HepG2 (cell line): ENCODE measurements at regions of chr13 and their contacts with region 1.

Region 1: GRCh38 chr13:24160454-24161009 is at the start of gene SPATA13:
- DNase-seq: peak; percentile 75
- ATAC-seq: peak; percentile 90
- H3K4me3 ChIP-seq: peak within 1 kb of the TSS; percentile 72 to 93 (median 87)
- H3K27ac ChIP-seq: peak within 1 kb of the TSS; percentile 62
- H3K4me1 ChIP-seq: peaks cover 33% of the 10 kb centered on the region
- H3K27me3 ChIP-seq: no peaks in the 10 kb centered on the region; a peak in 1 of 5 replicates
- CTCF ChIP-seq: no peak
- EP300 ChIP-seq: no peak
- POLR2A ChIP-seq: peak; percentile 78 to 89; a peak in 3 of 4 replicates
- RAD21 ChIP-seq: no peak; the same call in 1 of the 2 replicates
- total RNA-seq, gene SPATA13: 11.3 and 13.7 TPM in 2 replicates

Region 2: DNA sequence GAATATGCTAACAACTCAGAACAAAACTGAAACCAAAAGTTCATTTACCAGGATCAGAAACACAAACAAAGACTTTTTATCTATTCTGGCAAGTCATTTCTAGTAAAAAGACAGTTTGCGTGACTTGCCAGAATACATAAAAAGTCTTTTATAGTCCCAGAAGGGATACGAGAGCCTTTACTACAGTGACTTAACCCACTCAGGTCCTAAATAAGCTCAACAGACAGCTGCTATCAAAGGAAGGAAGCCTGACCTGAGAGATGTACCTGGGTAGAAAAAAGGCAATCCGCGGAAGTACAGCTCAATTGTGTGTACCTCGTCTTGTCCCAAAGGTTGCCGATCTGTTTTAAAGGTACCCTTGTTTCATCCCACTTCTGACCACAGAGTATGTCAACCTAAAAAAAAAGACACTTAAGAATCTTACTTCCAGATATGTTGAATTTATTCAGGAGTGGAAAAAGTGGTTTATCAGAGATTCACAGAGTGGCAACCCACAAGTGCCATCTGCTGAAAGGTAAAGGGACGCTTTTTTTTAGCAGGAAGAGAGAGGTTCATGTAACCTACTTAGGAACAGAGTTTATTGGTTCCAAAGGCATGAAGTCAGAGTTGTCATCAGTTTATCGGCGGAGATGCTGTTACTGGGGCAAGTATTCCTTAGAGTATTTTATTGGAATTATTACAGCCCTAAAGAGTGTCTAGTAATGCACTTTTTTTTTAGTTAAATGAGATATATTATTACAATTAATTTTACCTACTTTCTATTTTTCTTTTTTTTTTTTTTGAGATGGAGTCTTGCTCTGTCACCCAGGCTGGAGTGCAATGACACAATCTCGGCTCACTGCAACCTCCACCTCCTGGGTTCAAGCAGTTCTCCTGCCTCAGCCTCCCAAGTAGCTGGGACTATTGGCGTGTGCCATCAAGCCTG is 193.6 kb before region 1 on chr13:
- CTCF ChIA-PET with region 1: no interaction called
- POLR2A ChIA-PET with region 1: no interaction called
- in situ Hi-C with region 1: no loop called
- intact Hi-C with region 1: no loop called
- DNase-seq: no peak
- ATAC-seq: no peak
- H3K4me3 ChIP-seq: no peak overlapping the region
- H3K27ac ChIP-seq: no peak overlapping the region
- H3K4me1 ChIP-seq: no peaks in the 10 kb centered on the region
- H3K27me3 ChIP-seq: peaks cover 0 to 3% of the 10 kb centered on the region in 2 experiments; a peak in 1 of 5 replicates
- CTCF ChIP-seq: no peak
- EP300 ChIP-seq: no peak
- POLR2A ChIP-seq: no peak
- RAD21 ChIP-seq: no peak

Region 3: GRCh38 chr13:24020375-24020830 is 140.1 kb before region 1 on chr13:
- CTCF ChIA-PET with region 1: no interaction called
- POLR2A ChIA-PET with region 1: no interaction called
- in situ Hi-C with region 1: no loop called
- intact Hi-C with region 1: loop called (anchors 5 kb)
- DNase-seq: peak; percentile 51
- ATAC-seq: peak; percentile 67
- H3K4me3 ChIP-seq: no peak overlapping the region
- H3K27ac ChIP-seq: no peak overlapping the region
- H3K4me1 ChIP-seq: no peaks in the 10 kb centered on the region
- H3K27me3 ChIP-seq: peaks cover 0 to 6% of the 10 kb centered on the region in 2 experiments; a peak in 2 of 5 replicates
- CTCF ChIP-seq: peak; percentile 68
- EP300 ChIP-seq: no peak
- POLR2A ChIP-seq: no peak
- RAD21 ChIP-seq: peak; percentile 69

Region 4: GRCh38 chr13:24053519-24054251 is 106.8 kb before region 1 on chr13:
- CTCF ChIA-PET with region 1: no interaction called
- POLR2A ChIA-PET with region 1: no interaction called
- in situ Hi-C with region 1: no loop called
- intact Hi-C with region 1: loop called (anchors 2 kb)
- DNase-seq: peak; percentile 67
- ATAC-seq: peak; percentile 96
- H3K4me3 ChIP-seq: no peak overlapping the region
- H3K27ac ChIP-seq: no peak overlapping the region
- H3K4me1 ChIP-seq: peaks cover 17% of the 10 kb centered on the region
- H3K27me3 ChIP-seq: peaks cover 0 to 7% of the 10 kb centered on the region in 2 experiments; a peak in 1 of 5 replicates
- CTCF ChIP-seq: peak; percentile 89
- EP300 ChIP-seq: no peak
- POLR2A ChIP-seq: no peak
- RAD21 ChIP-seq: peak; percentile 86

Region 5: DNA sequence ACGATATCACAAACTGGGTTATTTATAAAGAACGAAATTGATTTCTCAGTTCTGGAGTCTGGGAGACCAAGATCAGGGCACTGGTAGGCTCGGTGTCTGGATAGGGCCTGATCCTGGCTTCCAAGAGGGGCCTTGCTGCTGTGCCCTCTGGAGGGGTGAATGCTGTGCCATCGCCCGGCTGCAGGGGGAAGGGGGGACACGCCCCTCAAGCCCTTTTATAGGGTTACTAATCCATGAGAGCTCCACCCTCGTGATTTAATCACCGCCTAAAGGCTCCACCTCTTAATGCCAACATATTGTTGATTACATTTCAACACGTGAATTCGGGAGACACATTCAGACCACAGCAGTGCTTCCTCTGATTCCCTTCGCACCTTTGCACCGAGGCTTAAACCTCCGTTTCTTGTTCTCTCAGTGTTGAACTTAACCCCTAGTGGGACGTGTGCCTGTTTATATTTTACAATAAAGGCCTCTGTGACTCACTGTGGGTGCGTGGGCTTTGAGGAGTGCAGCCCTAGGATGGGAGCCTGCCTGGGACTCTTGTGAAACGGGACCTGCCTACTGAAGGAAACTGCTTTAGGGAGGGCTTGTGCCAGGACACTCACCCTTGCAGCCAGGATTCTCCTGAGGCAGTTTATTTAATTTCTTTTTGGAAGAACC is 52.4 kb before region 1 on chr13:
- CTCF ChIA-PET with region 1: no interaction called
- POLR2A ChIA-PET with region 1: interaction called, 7 read pairs
- in situ Hi-C with region 1: no loop called
- intact Hi-C with region 1: loop called (anchors 5 kb)
- DNase-seq: no peak
- ATAC-seq: no peak
- H3K4me3 ChIP-seq: no peak overlapping the region
- H3K27ac ChIP-seq: no peak overlapping the region
- H3K4me1 ChIP-seq: peaks cover 30% of the 10 kb centered on the region
- H3K27me3 ChIP-seq: peaks cover 0 to 16% of the 10 kb centered on the region in 2 experiments; a peak in 3 of 5 replicates
- CTCF ChIP-seq: no peak
- EP300 ChIP-seq: no peak
- POLR2A ChIP-seq: no peak
- RAD21 ChIP-seq: no peak

Region 6: GRCh38 chr13:24148399-24149305 is 11.9 kb before region 1 on chr13:
- CTCF ChIA-PET with region 1: no interaction called
- POLR2A ChIA-PET with region 1: interaction called, 18 read pairs
- in situ Hi-C with region 1: no loop called
- intact Hi-C with region 1: no loop called
- DNase-seq: peak; percentile 90
- ATAC-seq: peak; percentile 85
- H3K4me3 ChIP-seq: peak overlapping the region in 2 of 3 experiments; percentile 44 to 50; a peak in 3 of 6 replicates
- H3K27ac ChIP-seq: peak overlapping the region; percentile 42
- H3K4me1 ChIP-seq: peaks cover 64% of the 10 kb centered on the region
- H3K27me3 ChIP-seq: peaks cover 0 to 5% of the 10 kb centered on the region in 2 experiments; a peak in 2 of 5 replicates
- CTCF ChIP-seq: peak; percentile 22; the same call in 1 of the 2 replicates
- EP300 ChIP-seq: peak in 1 of 2 experiments; percentile 73; a peak in 1 of 4 replicates
- POLR2A ChIP-seq: no peak
- RAD21 ChIP-seq: no peak

Region 7: DNA sequence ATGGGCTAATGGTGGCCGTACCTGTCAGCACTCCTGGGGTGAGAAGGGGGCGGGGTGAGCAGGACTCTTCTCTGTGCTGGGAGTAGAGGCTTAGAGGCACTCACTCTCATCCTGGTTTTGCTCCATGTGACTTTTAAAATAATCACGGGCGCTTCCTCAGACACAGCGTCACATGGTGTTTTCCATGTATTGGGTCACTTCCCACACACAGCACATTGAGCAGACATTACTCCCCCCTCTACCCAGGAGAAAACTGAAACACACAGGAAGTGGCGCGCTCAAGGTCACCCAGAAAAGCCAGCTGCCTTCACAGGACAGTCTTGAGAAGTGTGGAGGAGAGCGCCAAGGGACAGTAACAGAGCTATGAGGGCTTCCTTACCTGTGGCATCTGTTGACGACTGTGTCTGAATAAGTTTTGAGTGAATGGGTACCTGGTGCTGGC is 23.2 kb after region 1 on chr13:
- CTCF ChIA-PET with region 1: no interaction called
- POLR2A ChIA-PET with region 1: interaction called, 45 read pairs
- in situ Hi-C with region 1: no loop called
- intact Hi-C with region 1: loop called (anchors 1 kb)
- DNase-seq: peak; percentile 85
- ATAC-seq: peak; percentile 76
- H3K4me3 ChIP-seq: peak overlapping the region; percentile 48 to 60 (median 52); a peak in 5 of 6 replicates
- H3K27ac ChIP-seq: peak overlapping the region; percentile 98
- H3K4me1 ChIP-seq: peaks cover 84% of the 10 kb centered on the region
- H3K27me3 ChIP-seq: no peaks in the 10 kb centered on the region
- CTCF ChIP-seq: no peak
- EP300 ChIP-seq: peak; percentile 13 to 52; a peak in 1 of 4 replicates
- POLR2A ChIP-seq: peak; percentile 35 to 54; a peak in 2 of 4 replicates
- RAD21 ChIP-seq: no peak

Region 8: GRCh38 chr13:24220086-24220703 is 59.7 kb after region 1 on chr13:
- CTCF ChIA-PET with region 1: interaction called, 3 read pairs
- POLR2A ChIA-PET with region 1: interaction called, 15 read pairs
- in situ Hi-C with region 1: loop called (anchors 5 kb)
- intact Hi-C with region 1: loop called (anchors 2 kb)
- DNase-seq: peak; percentile 75
- ATAC-seq: peak; percentile 65
- H3K4me3 ChIP-seq: no peak overlapping the region
- H3K27ac ChIP-seq: peak overlapping the region; percentile 45
- H3K4me1 ChIP-seq: peaks cover 66% of the 10 kb centered on the region
- H3K27me3 ChIP-seq: no peaks in the 10 kb centered on the region
- CTCF ChIP-seq: peak; percentile 86
- EP300 ChIP-seq: no peak
- POLR2A ChIP-seq: no peak
- RAD21 ChIP-seq: peak; percentile 77